K562 (cell line): ENCODE measurements at regions of chr1 and their contacts with region 1.

Region 1: GRCh38 chr1:67853704-67854103 is 20.4 kb upstream of the GNG12 start:
- DNase-seq: peak; percentile 75 to 78 (median 76)
- ATAC-seq: peak; percentile 95
- H3K4me3 ChIP-seq: no peak overlapping the region
- H3K27ac ChIP-seq: no peak overlapping the region
- H3K4me1 ChIP-seq: no peaks in the 10 kb centered on the region; a peak in 2 of 5 replicates
- H3K27me3 ChIP-seq: no peaks in the 10 kb centered on the region; a peak in 1 of 5 replicates
- CTCF ChIP-seq: peak; percentile 90 to 94 (median 90)
- EP300 ChIP-seq: 0 out of 2 replicates have a peak, but pooled peaks have one; percentile 7
- POLR2A ChIP-seq: no peak
- RAD21 ChIP-seq: peak; percentile 100

Region 2: DNA sequence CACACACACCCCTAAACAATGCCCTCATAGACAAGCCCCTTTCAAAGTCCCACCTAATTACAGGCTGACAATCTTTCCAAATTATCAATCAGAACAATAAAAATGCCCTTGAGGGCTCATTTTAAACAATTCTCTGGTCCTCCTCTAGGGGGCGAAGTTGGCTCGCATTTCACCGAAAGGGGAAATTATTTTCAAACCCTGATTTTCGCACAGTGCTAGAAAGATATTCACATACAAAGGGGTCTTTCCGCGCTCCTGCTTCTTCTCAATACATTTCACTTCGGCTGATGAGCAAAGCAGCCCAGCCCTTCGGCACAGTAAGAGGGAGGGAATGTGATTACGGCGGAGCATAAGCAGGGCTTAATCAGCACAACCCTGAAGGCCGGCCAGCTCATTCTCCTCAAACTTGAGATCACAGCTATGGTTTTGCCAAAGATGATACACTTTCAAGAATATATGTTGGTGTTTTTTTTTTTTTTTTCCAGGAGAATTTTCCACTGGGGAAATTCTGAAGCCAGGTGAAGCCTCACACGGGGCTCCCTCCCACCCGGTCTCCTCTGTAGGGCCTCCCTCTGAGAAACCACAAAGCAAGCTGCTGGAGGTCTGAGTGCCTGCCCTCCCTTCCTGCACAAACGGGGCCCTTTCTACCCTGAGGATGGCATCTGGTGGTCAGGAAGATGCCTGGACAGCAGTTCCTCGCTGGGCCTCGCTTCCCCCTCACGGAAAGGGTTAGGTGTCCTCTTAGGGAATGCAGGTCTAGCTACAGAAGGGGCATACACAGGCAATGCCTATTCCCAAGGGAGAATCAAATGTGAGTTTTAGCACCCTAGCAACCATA is 87.3 kb before region 1 on chr1:
- CTCF ChIA-PET with region 1: no interaction called
- POLR2A ChIA-PET with region 1: no interaction called
- in situ Hi-C with region 1: loop called (anchors 5 kb)
- intact Hi-C with region 1: loop called (anchors 1 kb)
- DNase-seq: peak; percentile 37 to 65 (median 46)
- ATAC-seq: peak; percentile 60
- H3K4me3 ChIP-seq: no peak overlapping the region
- H3K27ac ChIP-seq: no peak overlapping the region
- H3K4me1 ChIP-seq: no peaks in the 10 kb centered on the region; a peak in 2 of 5 replicates
- H3K27me3 ChIP-seq: no peaks in the 10 kb centered on the region
- CTCF ChIP-seq: peak; percentile 63 to 87 (median 80)
- EP300 ChIP-seq: no peak
- POLR2A ChIP-seq: no peak
- RAD21 ChIP-seq: peak; percentile 80 to 81

Region 3: DNA sequence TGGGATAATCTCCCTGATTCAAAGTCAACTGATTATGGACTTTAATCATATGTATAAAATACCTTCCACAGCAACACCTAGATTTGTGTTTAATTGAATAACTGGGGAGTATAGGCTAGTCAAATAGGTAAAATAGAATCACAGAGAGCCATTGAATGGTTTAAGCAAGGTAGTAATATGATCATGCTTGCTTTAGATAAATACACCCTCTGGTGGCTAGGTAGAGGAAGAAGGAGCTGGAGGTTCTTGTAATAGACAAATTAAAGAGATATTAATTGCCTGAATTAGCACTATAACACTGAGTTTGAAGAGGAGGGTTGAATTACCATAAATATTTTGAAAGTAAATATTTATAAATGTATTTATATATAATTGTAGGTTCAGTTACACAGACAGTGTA is 156.4 kb after region 1 on chr1:
- CTCF ChIA-PET with region 1: interaction called, 19 read pairs
- POLR2A ChIA-PET with region 1: interaction called, 3 read pairs
- in situ Hi-C with region 1: loop called (anchors 10 kb)
- intact Hi-C with region 1: loop called (anchors 1 kb)
- DNase-seq: peak in 1 of 4 experiments; percentile 12
- ATAC-seq: peak; percentile 63; the same call in 2 of the 3 replicates
- H3K4me3 ChIP-seq: no peak overlapping the region
- H3K27ac ChIP-seq: no peak overlapping the region
- H3K4me1 ChIP-seq: no peaks in the 10 kb centered on the region; a peak in 1 of 5 replicates
- H3K27me3 ChIP-seq: no peaks in the 10 kb centered on the region
- CTCF ChIP-seq: peak in 2 of 3 experiments; percentile 12 to 64; a peak in 3 of 6 replicates
- EP300 ChIP-seq: no peak
- POLR2A ChIP-seq: no peak
- RAD21 ChIP-seq: peak; percentile 84 to 93

Region 4: GRCh38 chr1:68051475-68051874 is 197.8 kb after region 1 on chr1:
- CTCF ChIA-PET with region 1: no interaction called
- POLR2A ChIA-PET with region 1: interaction called, 3 read pairs
- in situ Hi-C with region 1: no loop called
- intact Hi-C with region 1: loop called (anchors 2 kb)
- DNase-seq: no peak
- ATAC-seq: peak; percentile 40; the same call in 2 of the 3 replicates
- H3K4me3 ChIP-seq: no peak overlapping the region
- H3K27ac ChIP-seq: no peak overlapping the region
- H3K4me1 ChIP-seq: peaks cover 0 to 18% of the 10 kb centered on the region in 2 experiments; a peak in 4 of 5 replicates
- H3K27me3 ChIP-seq: peaks cover 3 to 21% of the 10 kb centered on the region in 2 experiments; a peak in 4 of 5 replicates
- CTCF ChIP-seq: peak; percentile 30 to 44 (median 40); a peak in 5 of 6 replicates
- EP300 ChIP-seq: no peak
- POLR2A ChIP-seq: no peak
- RAD21 ChIP-seq: peak; percentile 45 to 60; a peak in 3 of 4 replicates

Region 5: GRCh38 chr1:68111519-68112436 is 258.1 kb after region 1 on chr1:
- CTCF ChIA-PET with region 1: interaction called, 37 read pairs
- POLR2A ChIA-PET with region 1: interaction called, 3 read pairs
- in situ Hi-C with region 1: loop called (anchors 5 kb)
- intact Hi-C with region 1: loop called (anchors 1 kb)
- DNase-seq: peak in 2 of 4 experiments; percentile 42 to 51
- ATAC-seq: peak; percentile 93
- H3K4me3 ChIP-seq: no peak overlapping the region
- H3K27ac ChIP-seq: no peak overlapping the region
- H3K4me1 ChIP-seq: no peaks in the 10 kb centered on the region
- H3K27me3 ChIP-seq: no peaks in the 10 kb centered on the region; a peak in 1 of 5 replicates
- CTCF ChIP-seq: peak; percentile 71 to 84 (median 74)
- EP300 ChIP-seq: no peak
- POLR2A ChIP-seq: no peak
- RAD21 ChIP-seq: peak; percentile 97

Region 6: GRCh38 chr1:68141071-68142021 is 287.6 kb after region 1 on chr1:
- CTCF ChIA-PET with region 1: no interaction called
- POLR2A ChIA-PET with region 1: no interaction called
- in situ Hi-C with region 1: no loop called
- intact Hi-C with region 1: no loop called
- DNase-seq: no peak
- ATAC-seq: no peak
- H3K4me3 ChIP-seq: no peak overlapping the region
- H3K27ac ChIP-seq: no peak overlapping the region
- H3K4me1 ChIP-seq: no peaks in the 10 kb centered on the region
- H3K27me3 ChIP-seq: 0 out of 5 replicates have a peak, but pooled peaks cover 0 to 5% of the 10 kb centered on the region in 2 experiments
- CTCF ChIP-seq: no peak
- EP300 ChIP-seq: no peak
- POLR2A ChIP-seq: no peak
- RAD21 ChIP-seq: no peak

Region 7: DNA sequence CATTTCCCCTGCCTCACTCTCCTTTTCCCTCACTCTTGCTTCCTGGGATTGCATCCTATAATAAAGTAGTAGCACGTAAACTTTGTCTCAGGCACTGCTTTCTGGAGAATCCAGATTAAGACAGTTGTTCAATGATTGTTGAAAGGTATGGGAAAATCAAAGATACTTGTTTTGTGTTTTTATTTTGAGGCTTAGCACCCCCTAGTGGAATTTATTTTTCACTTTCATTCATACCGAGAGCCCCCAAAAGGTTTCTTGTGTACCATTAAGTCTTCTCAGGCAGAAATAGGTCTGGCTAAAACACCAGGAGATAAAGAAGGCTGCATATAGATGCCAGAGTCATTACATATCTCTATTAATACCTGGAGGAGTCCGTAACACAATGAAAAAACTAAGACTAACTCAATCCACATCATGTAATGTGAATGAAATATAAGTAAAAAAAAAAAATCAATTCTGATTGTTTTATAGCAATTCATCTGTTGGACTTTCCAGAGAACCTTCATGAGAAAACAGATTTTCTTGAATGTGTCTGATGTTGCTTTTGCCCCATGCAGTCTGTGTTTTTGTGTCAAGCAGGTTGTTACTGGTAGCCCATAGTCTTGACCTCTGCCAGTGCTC is 492.6 kb after region 1 on chr1:
- CTCF ChIA-PET with region 1: interaction called, 3 read pairs
- POLR2A ChIA-PET with region 1: no interaction called
- in situ Hi-C with region 1: loop called (anchors 10 kb)
- intact Hi-C with region 1: loop called (anchors 2 kb)
- DNase-seq: peak in 2 of 4 experiments; percentile 7 to 19
- ATAC-seq: no peak; the same call in 2 of the 3 replicates
- H3K4me3 ChIP-seq: no peak overlapping the region
- H3K27ac ChIP-seq: no peak overlapping the region
- H3K4me1 ChIP-seq: no peaks in the 10 kb centered on the region
- H3K27me3 ChIP-seq: no peaks in the 10 kb centered on the region
- CTCF ChIP-seq: peak; percentile 26 to 47 (median 38); a peak in 4 of 6 replicates
- EP300 ChIP-seq: no peak
- POLR2A ChIP-seq: no peak
- RAD21 ChIP-seq: peak; percentile 20 to 51; a peak in 3 of 4 replicates